ENCODE measurements at regions of chr1 and their contacts with region 1.

Region 1: DNA sequence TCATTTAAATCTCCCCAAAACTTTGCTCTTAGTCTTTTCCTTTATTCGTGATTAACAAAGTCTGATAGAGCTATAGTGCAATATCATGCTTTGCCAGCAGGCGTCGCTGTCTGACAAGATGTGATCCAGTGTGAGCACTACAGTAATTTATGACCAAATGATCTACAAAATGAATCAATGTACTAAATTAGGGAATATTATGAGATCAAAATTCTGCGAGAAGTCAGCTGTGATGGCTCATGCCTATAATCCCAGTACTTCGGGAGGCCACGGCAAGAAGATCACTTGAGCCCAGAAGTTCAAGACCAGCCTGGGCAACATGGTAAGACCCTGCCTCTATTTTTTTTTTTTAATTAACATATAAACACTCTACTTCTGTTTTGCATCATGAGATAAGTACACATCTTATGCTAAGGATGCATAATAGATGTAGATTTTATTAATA is 3.6 kb upstream of the SPSB1 start:
- DNase-seq: peak; percentile 65 to 95 (median 84)
- H3K4me3 ChIP-seq: no peak overlapping the region
- H3K27ac ChIP-seq: peak overlapping the region in 4 of 5 donors; percentile 71 to 91 (median 83)
- H3K4me1 ChIP-seq: peaks cover 10 to 29% of the 10 kb centered on the region in 2 donors
- H3K27me3 ChIP-seq: no peaks in the 10 kb centered on the region
- CTCF ChIP-seq: peak; percentile 90 to 98 (median 98)
- POLR2A ChIP-seq: no peak

Region 2: GRCh38 chr1:9338397-9339246 is 49.5 kb after region 1 on chr1:
- intact Hi-C with region 1: no loop called
- DNase-seq: no peak
- H3K4me3 ChIP-seq: no peak overlapping the region
- H3K27ac ChIP-seq: peak overlapping the region in 2 of 5 donors; percentile 41 to 44
- H3K4me1 ChIP-seq: peaks cover 0 to 31% of the 10 kb centered on the region in 2 donors
- H3K27me3 ChIP-seq: no peaks in the 10 kb centered on the region
- CTCF ChIP-seq: no peak
- POLR2A ChIP-seq: no peak

Region 3: GRCh38 chr1:9455487-9456234 is 166.5 kb after region 1 on chr1:
- intact Hi-C with region 1: loop called (anchors 5 to 10 kb)
- DNase-seq: peak; percentile 28 to 78 (median 70)
- H3K4me3 ChIP-seq: no peak overlapping the region
- H3K27ac ChIP-seq: no peak overlapping the region
- H3K4me1 ChIP-seq: peaks cover 0 to 4% of the 10 kb centered on the region in 2 donors
- H3K27me3 ChIP-seq: no peaks in the 10 kb centered on the region
- CTCF ChIP-seq: peak; percentile 64 to 83 (median 73)
- POLR2A ChIP-seq: no peak

Region 4: DNA sequence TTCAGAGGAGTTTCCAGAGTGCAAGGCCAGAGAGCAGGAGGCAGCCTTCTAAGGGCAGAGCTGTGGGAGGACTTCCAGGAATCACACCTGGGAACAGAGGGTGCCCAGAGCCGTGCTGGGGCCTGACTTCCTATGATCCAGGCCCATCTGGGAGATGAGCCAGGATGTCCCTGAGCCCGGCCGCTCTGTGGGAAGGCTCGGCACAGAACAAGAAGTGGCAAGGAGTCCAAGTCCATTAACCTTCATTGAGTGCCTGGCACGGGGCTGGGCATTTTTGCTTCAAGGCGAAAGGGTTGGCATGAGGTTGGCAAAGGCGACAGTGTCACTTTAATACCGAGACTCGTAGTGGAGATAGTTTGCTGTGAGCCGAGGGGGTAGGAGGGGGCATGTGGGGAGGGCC is 317.8 kb after region 1 on chr1:
- intact Hi-C with region 1: no loop called
- DNase-seq: peak; percentile 75 to 86 (median 78)
- H3K4me3 ChIP-seq: no peak overlapping the region
- H3K27ac ChIP-seq: peak overlapping the region in 2 of 5 donors; percentile 22 to 56
- H3K4me1 ChIP-seq: peaks cover 0 to 11% of the 10 kb centered on the region in 2 donors
- H3K27me3 ChIP-seq: no peaks in the 10 kb centered on the region
- CTCF ChIP-seq: no peak
- POLR2A ChIP-seq: no peak

Region 5: GRCh38 chr1:9643351-9644256 is 354.5 kb after region 1 on chr1:
- intact Hi-C with region 1: no loop called
- DNase-seq: no peak
- H3K4me3 ChIP-seq: no peak overlapping the region
- H3K27ac ChIP-seq: no peak overlapping the region
- H3K4me1 ChIP-seq: no peaks in the 10 kb centered on the region
- H3K27me3 ChIP-seq: no peaks in the 10 kb centered on the region
- CTCF ChIP-seq: no peak
- POLR2A ChIP-seq: no peak

Region 6: DNA sequence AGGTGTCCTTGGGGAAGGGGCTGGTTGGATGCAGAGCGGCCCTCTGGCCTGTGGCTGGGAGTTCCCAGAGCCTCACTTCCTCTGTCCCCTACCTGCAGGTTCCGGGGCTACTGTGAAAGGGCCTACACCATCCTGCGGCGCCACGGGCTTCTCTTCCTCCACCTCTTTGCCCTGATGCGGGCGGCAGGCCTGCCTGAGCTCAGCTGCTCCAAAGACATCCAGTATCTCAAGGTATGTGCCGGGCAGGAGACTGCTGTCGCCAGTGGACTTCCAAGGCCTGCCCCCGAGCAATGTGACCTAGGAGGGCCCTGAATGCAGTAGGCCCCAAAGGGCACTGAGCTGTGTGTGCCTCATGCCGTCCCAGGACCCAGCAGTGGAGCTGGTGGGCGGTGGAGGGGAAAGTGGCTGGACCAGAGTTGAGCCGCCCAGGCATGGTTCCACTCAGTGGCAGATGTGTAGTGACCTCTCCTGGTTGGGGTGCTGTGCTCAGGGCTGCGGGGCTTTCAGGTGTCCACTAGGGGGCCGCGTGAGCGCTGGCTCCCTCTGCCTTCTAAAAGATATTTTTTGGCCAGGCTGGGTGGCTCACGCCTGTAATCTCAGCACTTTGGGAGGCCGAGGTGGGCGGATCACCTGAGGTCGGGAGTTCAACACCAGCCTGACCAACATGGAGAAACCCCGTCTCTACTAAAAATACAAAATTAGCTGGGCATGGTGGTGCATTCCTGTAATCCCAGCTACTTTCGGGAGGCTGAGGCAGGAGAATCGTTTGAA is 435.8 kb after region 1 on chr1:
- intact Hi-C with region 1: no loop called
- DNase-seq: peak in 6 of 7 donors; percentile 41 to 76 (median 66)
- H3K4me3 ChIP-seq: no peak overlapping the region
- H3K27ac ChIP-seq: no peak overlapping the region
- H3K4me1 ChIP-seq: no peaks in the 10 kb centered on the region
- H3K27me3 ChIP-seq: no peaks in the 10 kb centered on the region
- CTCF ChIP-seq: peak; percentile 59 to 76 (median 70)
- POLR2A ChIP-seq: no peak

Measured in adrenal gland (tissue), 19 donors.